Naive thymus-derived CD4-positive, alpha-beta T cell (primary cell): ENCODE measurements at regions of chr6 and their contacts with region 1.

Region 1: DNA sequence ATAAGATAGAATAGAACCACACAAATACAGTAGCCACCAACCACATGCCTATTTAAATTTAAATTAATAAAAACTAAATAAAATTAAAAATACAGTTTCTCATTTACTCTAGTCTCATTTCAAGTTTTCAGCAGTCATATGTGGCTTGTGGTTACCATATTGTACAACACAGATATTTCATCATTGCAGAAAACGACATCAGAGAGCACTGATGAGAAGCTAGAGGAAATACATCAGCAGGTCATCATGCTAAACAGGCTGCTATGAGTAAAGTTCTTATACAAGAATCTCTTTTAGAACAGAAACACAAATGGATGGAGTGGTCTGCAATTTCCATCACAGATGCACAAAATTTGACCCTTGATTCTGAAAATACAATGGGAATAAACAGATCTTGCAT is 36.6 kb downstream of the TBC1D32 start:
- DNase-seq: no peak
- ATAC-seq: peak; percentile 54
- H3K4me3 ChIP-seq: no peak overlapping the region
- H3K4me3 Mint-ChIP-seq: no peak overlapping the region
- H3K27ac ChIP-seq: no peak overlapping the region
- H3K27ac Mint-ChIP-seq: no peak overlapping the region
- H3K4me1 ChIP-seq: no peaks in the 10 kb centered on the region
- H3K4me1 Mint-ChIP-seq: peaks cover 0 to 11% (median 0%) of the 10 kb centered on the region in 7 donors
- H3K27me3 ChIP-seq: no peaks in the 10 kb centered on the region
- H3K27me3 Mint-ChIP-seq: no peaks in the 10 kb centered on the region

Region 2: GRCh38 chr6:121274666-121275295 is 22.9 kb before region 1 on chr6:
- CTCF ChIA-PET with region 1: no interaction called
- POLR2A ChIA-PET with region 1: no interaction called
- intact Hi-C with region 1: loop called in 1 of 2 experiments (anchors 1 kb)
- DNase-seq: no peak
- ATAC-seq: no peak
- H3K4me3 ChIP-seq: no peak overlapping the region
- H3K4me3 Mint-ChIP-seq: no peak overlapping the region
- H3K27ac ChIP-seq: no peak overlapping the region
- H3K27ac Mint-ChIP-seq: no peak overlapping the region
- H3K4me1 ChIP-seq: no peaks in the 10 kb centered on the region
- H3K4me1 Mint-ChIP-seq: no peaks in the 10 kb centered on the region
- H3K27me3 ChIP-seq: no peaks in the 10 kb centered on the region
- H3K27me3 Mint-ChIP-seq: no peaks in the 10 kb centered on the region

Region 3: DNA sequence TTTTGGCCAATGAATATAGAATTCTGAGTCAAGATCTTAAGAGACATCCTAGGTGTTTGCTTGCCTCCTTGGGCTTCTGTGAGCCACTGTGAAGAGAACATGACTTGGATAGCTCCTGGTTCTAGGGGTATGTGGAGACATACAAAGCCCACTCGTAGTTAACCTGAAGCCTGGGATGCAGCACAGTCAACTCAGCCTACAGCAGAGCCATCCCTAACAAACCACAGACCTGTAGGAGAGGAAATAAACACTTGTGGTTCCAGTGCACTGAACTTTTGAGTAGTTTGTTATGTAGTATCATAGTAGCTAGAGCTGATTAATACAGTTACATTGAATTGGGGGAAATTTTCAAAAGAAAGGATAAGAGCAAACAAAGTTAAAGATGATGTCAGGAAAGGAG is 627.3 kb after region 1 on chr6:
- CTCF ChIA-PET with region 1: no interaction called
- POLR2A ChIA-PET with region 1: no interaction called
- intact Hi-C with region 1: no loop called
- DNase-seq: no peak
- ATAC-seq: no peak
- H3K4me3 ChIP-seq: no peak overlapping the region
- H3K4me3 Mint-ChIP-seq: peak overlapping the region in 2 of 10 donors; percentile 9 to 14
- H3K27ac ChIP-seq: no peak overlapping the region
- H3K27ac Mint-ChIP-seq: peak overlapping the region in 2 of 9 donors; percentile 11 to 51
- H3K4me1 ChIP-seq: peaks cover 0 to 2% of the 10 kb centered on the region in 2 donors
- H3K4me1 Mint-ChIP-seq: peaks cover 3 to 10% (median 7%) of the 10 kb centered on the region in 7 donors
- H3K27me3 ChIP-seq: no peaks in the 10 kb centered on the region
- H3K27me3 Mint-ChIP-seq: peaks cover 0 to 4% (median 0%) of the 10 kb centered on the region in 5 donors